HCT116 (cell line): ENCODE measurements at regions of chr17 and their contacts with region 1.

Region 1: GRCh38 chr17:933312-934083 is 46.1 kb downstream of the NXN start:
- DNase-seq: peak; percentile 98
- ATAC-seq: peak; percentile 73
- H3K4me3 ChIP-seq: peak overlapping the region; percentile 24 to 52
- H3K27ac ChIP-seq: peak overlapping the region; percentile 97
- H3K4me1 ChIP-seq: peaks cover 81 to 99% of the 10 kb centered on the region in 2 experiments
- H3K27me3 ChIP-seq: no peaks in the 10 kb centered on the region
- CTCF ChIP-seq: no peak
- POLR2A ChIP-seq: no peak
- RAD21 ChIP-seq: peak; percentile 46; the same call in 1 of the 2 replicates

Region 2: GRCh38 chr17:879549-880442 is 53.7 kb before region 1 on chr17:
- CTCF ChIA-PET with region 1: interaction called, 5 read pairs
- POLR2A ChIA-PET with region 1: interaction called, 3 read pairs
- RAD21 ChIA-PET with region 1: interaction called, 3 to 6 read pairs
- intact Hi-C with region 1: loop called (anchors 2 kb)
- DNase-seq: peak; percentile 89
- ATAC-seq: peak; percentile 84
- H3K4me3 ChIP-seq: no peak overlapping the region
- H3K27ac ChIP-seq: peak overlapping the region; percentile 42
- H3K4me1 ChIP-seq: peaks cover 38 to 61% of the 10 kb centered on the region in 2 experiments
- H3K27me3 ChIP-seq: no peaks in the 10 kb centered on the region
- CTCF ChIP-seq: peak; percentile 63 to 79 (median 71)
- POLR2A ChIP-seq: no peak
- RAD21 ChIP-seq: peak; percentile 90

Region 3: GRCh38 chr17:973053-973452 is 39.6 kb after region 1 on chr17:
- CTCF ChIA-PET with region 1: no interaction called
- POLR2A ChIA-PET with region 1: interaction called, 4 read pairs
- RAD21 ChIA-PET with region 1: interaction called in 1 of 2 experiments, 4 read pairs
- intact Hi-C with region 1: loop called (anchors 2 kb)
- DNase-seq: peak; percentile 69
- ATAC-seq: peak; percentile 84
- H3K4me3 ChIP-seq: peak overlapping the region in 1 of 2 experiments; percentile 36; a peak in 3 of 4 replicates
- H3K27ac ChIP-seq: peak overlapping the region; percentile 55
- H3K4me1 ChIP-seq: peaks cover 62 to 96% of the 10 kb centered on the region in 2 experiments
- H3K27me3 ChIP-seq: no peaks in the 10 kb centered on the region
- CTCF ChIP-seq: no peak
- POLR2A ChIP-seq: no peak
- RAD21 ChIP-seq: no peak

Region 4: GRCh38 chr17:1047177-1047878 is 113.8 kb after region 1 on chr17:
- CTCF ChIA-PET with region 1: no interaction called
- POLR2A ChIA-PET with region 1: no interaction called
- RAD21 ChIA-PET with region 1: no interaction called
- intact Hi-C with region 1: no loop called
- DNase-seq: no peak
- ATAC-seq: no peak
- H3K4me3 ChIP-seq: no peak overlapping the region
- H3K27ac ChIP-seq: no peak overlapping the region
- H3K4me1 ChIP-seq: no peaks in the 10 kb centered on the region
- H3K27me3 ChIP-seq: no peaks in the 10 kb centered on the region
- CTCF ChIP-seq: no peak
- POLR2A ChIP-seq: no peak
- RAD21 ChIP-seq: no peak